MCF 10A (cell line): ENCODE measurements at regions of chr10 and their contacts with region 1.

Region 1: GRCh38 chr10:29635711-29636144 is 957 bp upstream of the SVIL start:
- DNase-seq: no peak
- H3K4me3 Mint-ChIP-seq: peak overlapping the region; percentile 78
- H3K27ac Mint-ChIP-seq: peak overlapping the region; percentile 96
- H3K4me1 Mint-ChIP-seq: peaks cover 45% of the 10 kb centered on the region
- H3K27me3 Mint-ChIP-seq: no peaks in the 10 kb centered on the region
- CTCF ChIP-seq: no peak

Region 2: DNA sequence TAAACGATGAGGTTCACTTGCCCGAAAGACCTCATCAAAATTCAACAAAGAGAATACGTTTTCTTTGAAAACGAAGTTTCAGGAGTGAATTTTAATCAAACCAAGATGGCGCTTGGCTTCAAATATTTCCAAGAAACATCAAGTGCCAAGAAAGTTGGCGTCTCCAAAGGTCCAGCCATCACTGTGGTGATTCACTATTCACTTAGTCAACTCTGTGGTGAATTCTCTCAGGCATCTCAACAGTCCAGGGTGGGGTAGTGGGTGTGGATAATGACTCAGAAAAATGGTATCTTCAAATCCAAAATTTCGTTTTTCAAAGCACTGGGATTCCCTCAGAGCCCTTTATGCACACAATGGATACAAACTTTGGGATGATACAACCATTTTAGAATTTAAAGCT is 134.0 kb before region 1 on chr10:
- CTCF ChIA-PET with region 1: no interaction called
- POLR2A ChIA-PET with region 1: no interaction called
- intact Hi-C with region 1: no loop called
- DNase-seq: peak; percentile 90
- H3K4me3 Mint-ChIP-seq: no peak overlapping the region
- H3K27ac Mint-ChIP-seq: peak overlapping the region; percentile 47
- H3K4me1 Mint-ChIP-seq: peaks cover 14% of the 10 kb centered on the region
- H3K27me3 Mint-ChIP-seq: no peaks in the 10 kb centered on the region
- CTCF ChIP-seq: no peak

Region 3: GRCh38 chr10:29702273-29703164 is 66.8 kb after region 1 on chr10:
- CTCF ChIA-PET with region 1: no interaction called
- POLR2A ChIA-PET with region 1: no interaction called
- intact Hi-C with region 1: no loop called
- DNase-seq: no peak
- H3K4me3 Mint-ChIP-seq: no peak overlapping the region
- H3K27ac Mint-ChIP-seq: no peak overlapping the region
- H3K4me1 Mint-ChIP-seq: no peaks in the 10 kb centered on the region
- H3K27me3 Mint-ChIP-seq: no peaks in the 10 kb centered on the region
- CTCF ChIP-seq: no peak

Region 4: DNA sequence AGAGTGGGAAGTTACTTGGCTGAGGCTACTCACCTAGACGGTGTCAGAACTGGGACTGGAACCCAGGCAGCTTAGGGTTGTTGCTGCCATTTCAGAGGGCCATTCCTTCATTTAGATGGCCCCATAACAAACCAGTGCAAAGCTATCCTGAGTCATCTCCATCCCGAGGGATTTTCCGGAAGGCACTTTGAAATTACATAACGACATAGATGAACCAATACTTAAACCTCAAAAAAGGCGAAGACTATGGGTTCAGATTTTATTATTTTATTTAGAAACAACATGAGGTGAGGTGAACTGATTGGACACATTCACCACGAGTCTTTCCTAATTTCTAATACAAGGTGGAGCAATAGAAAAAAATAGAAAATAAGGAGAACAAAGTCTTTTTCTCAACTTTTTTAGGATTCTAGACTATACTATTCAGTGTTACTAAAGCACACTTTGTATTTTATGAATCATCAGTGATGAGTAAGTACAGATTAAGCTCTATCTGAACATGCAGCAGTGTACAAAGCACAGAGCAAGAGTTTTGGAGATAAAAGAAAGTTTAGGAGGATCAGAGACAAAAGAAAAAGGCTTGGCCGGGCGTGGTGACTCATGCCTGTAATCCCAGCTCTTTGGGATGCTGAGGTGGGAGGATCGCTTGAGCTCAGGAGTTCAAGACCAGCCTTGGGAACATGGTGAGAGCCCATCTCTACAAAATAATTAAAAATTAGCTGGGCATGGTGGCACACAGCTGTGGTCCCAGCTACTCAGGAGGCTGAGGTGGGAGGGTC is 78.6 kb after region 1 on chr10:
- CTCF ChIA-PET with region 1: no interaction called
- POLR2A ChIA-PET with region 1: interaction called, 13 read pairs
- intact Hi-C with region 1: no loop called
- DNase-seq: peak; percentile 87
- H3K4me3 Mint-ChIP-seq: no peak overlapping the region
- H3K27ac Mint-ChIP-seq: peak overlapping the region; percentile 57
- H3K4me1 Mint-ChIP-seq: peaks cover 29% of the 10 kb centered on the region
- H3K27me3 Mint-ChIP-seq: no peaks in the 10 kb centered on the region
- CTCF ChIP-seq: no peak

Region 5: GRCh38 chr10:30472414-30473155 is 836.9 kb after region 1 on chr10:
- CTCF ChIA-PET with region 1: no interaction called
- POLR2A ChIA-PET with region 1: no interaction called
- intact Hi-C with region 1: no loop called
- DNase-seq: no peak
- H3K4me3 Mint-ChIP-seq: no peak overlapping the region
- H3K27ac Mint-ChIP-seq: no peak overlapping the region
- H3K4me1 Mint-ChIP-seq: no peaks in the 10 kb centered on the region
- H3K27me3 Mint-ChIP-seq: no peaks in the 10 kb centered on the region
- CTCF ChIP-seq: no peak